ENCODE measurements at regions of chr2 and their contacts with region 1.

Region 1: GRCh38 chr2:99180755-99181623 is at the starts of genes MITD1 and MRPL30:
- DNase-seq: peak; percentile 96
- H3K4me3 Mint-ChIP-seq: peak within 1 kb of the TSS; percentile 87
- H3K27ac Mint-ChIP-seq: peak within 1 kb of the TSS; percentile 86
- H3K4me1 Mint-ChIP-seq: peaks cover 30% of the 10 kb centered on the region
- H3K27me3 Mint-ChIP-seq: no peaks in the 10 kb centered on the region
- CTCF ChIP-seq: no peak
- total RNA-seq, gene MITD1: 19.1 and 21.2 TPM in 2 replicates
- total RNA-seq, gene MRPL30: 39.1 and 42.5 TPM in 2 replicates

Region 2: GRCh38 chr2:98880266-98881152 is 300.5 kb before region 1 on chr2:
- CTCF ChIA-PET with region 1: no interaction called
- POLR2A ChIA-PET with region 1: no interaction called
- intact Hi-C with region 1: no loop called
- DNase-seq: no peak
- H3K4me3 Mint-ChIP-seq: no peak overlapping the region
- H3K27ac Mint-ChIP-seq: no peak overlapping the region
- H3K4me1 Mint-ChIP-seq: peaks cover 18% of the 10 kb centered on the region
- H3K27me3 Mint-ChIP-seq: no peaks in the 10 kb centered on the region
- CTCF ChIP-seq: no peak

Region 3: DNA sequence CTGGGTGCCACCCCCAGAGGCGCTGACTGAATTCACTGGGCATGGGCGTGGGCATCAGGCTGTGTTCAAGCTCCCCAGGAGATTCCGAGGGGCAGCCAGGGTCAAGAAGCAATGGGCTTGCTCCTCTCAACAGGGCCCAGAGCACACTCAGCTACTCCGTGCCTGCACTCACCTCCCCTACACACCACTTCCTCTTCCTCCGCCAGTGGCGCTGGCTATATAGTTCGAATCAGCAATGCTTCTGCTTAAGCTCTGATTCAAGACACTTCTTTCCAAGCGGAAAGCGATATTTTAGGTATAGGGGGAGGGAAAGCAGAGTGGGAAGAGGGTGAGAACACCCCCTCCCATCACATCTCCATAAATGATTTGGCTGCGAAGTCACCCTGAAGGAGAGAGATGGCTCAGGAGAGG is 287.1 kb before region 1 on chr2:
- CTCF ChIA-PET with region 1: no interaction called
- POLR2A ChIA-PET with region 1: no interaction called
- intact Hi-C with region 1: no loop called
- DNase-seq: no peak
- H3K4me3 Mint-ChIP-seq: no peak overlapping the region
- H3K27ac Mint-ChIP-seq: no peak overlapping the region
- H3K4me1 Mint-ChIP-seq: no peaks in the 10 kb centered on the region
- H3K27me3 Mint-ChIP-seq: no peaks in the 10 kb centered on the region
- CTCF ChIP-seq: no peak

Region 4: GRCh38 chr2:99101697-99102096 is 79.3 kb before region 1 on chr2:
- CTCF ChIA-PET with region 1: no interaction called
- POLR2A ChIA-PET with region 1: no interaction called
- intact Hi-C with region 1: no loop called
- DNase-seq: peak; percentile 11
- H3K4me3 Mint-ChIP-seq: no peak overlapping the region
- H3K27ac Mint-ChIP-seq: peak overlapping the region; percentile 6
- H3K4me1 Mint-ChIP-seq: peaks cover 8% of the 10 kb centered on the region
- H3K27me3 Mint-ChIP-seq: no peaks in the 10 kb centered on the region
- CTCF ChIP-seq: no peak

Region 5: GRCh38 chr2:99169534-99169933 is 11.5 kb before region 1 on chr2:
- CTCF ChIA-PET with region 1: interaction called, 7 read pairs
- POLR2A ChIA-PET with region 1: interaction called, 31 read pairs
- intact Hi-C with region 1: no loop called
- DNase-seq: no peak
- H3K4me3 Mint-ChIP-seq: no peak overlapping the region
- H3K27ac Mint-ChIP-seq: no peak overlapping the region
- H3K4me1 Mint-ChIP-seq: no peaks in the 10 kb centered on the region
- H3K27me3 Mint-ChIP-seq: no peaks in the 10 kb centered on the region
- CTCF ChIP-seq: no peak